ENCODE measurements at regions of chr6 and their contacts with region 1.

Region 1: DNA sequence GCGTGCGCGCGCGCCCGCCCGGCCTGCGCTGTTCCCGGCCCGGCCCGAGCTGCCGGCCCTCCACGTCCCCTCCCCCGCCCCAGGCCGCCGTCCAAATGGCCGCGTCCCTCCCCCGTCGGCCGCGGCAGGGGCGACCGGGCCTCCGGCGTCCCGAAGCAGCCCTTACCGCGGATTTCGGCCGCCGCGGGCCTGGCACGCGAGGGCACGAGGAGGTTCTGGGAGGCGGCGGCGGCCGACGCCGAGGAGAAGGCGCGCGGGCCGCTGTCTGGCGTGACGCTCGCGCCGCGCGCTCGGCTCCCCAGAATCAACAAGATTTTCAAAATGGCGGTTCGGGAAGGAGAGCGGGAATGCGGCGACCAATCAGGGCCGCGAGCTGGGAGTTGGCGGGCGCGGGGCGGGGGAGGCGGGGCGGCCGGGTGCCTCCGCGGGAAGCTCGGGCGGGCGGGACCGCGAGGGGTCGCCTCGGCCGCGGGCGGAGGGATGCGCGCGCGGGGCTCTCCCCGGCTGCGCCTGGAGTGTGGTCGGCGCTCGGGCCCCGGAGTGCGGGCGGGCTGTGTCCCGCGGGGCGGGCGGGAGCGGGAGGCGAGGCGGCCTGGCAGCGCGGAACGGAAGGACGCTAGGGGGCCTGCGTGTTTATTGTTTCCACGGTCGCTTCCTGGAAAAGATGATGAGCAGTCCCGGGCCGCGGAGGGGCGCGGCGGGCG is at the start of gene DEK:
- DNase-seq: peak; percentile 85
- ATAC-seq: peak; percentile 68
- H3K4me3 ChIP-seq: peak within 1 kb of the TSS; percentile 68 to 89 (median 83)
- H3K4me3 Mint-ChIP-seq: peak within 1 kb of the TSS; percentile 93
- H3K27ac ChIP-seq: peak within 1 kb of the TSS; percentile 62 to 85
- H3K27ac Mint-ChIP-seq: peak within 1 kb of the TSS; percentile 98
- H3K4me1 ChIP-seq: peaks cover 42 to 47% of the 10 kb centered on the region in 2 donors
- H3K4me1 Mint-ChIP-seq: peaks cover 49% of the 10 kb centered on the region
- H3K27me3 ChIP-seq: peaks cover 0 to 3% (median 0%) of the 10 kb centered on the region in 4 experiments
- H3K27me3 Mint-ChIP-seq: no peaks in the 10 kb centered on the region
- CTCF ChIP-seq: peak; percentile 53
- total RNA-seq, gene DEK: 103 and 114 TPM in 2 replicates

Region 2: DNA sequence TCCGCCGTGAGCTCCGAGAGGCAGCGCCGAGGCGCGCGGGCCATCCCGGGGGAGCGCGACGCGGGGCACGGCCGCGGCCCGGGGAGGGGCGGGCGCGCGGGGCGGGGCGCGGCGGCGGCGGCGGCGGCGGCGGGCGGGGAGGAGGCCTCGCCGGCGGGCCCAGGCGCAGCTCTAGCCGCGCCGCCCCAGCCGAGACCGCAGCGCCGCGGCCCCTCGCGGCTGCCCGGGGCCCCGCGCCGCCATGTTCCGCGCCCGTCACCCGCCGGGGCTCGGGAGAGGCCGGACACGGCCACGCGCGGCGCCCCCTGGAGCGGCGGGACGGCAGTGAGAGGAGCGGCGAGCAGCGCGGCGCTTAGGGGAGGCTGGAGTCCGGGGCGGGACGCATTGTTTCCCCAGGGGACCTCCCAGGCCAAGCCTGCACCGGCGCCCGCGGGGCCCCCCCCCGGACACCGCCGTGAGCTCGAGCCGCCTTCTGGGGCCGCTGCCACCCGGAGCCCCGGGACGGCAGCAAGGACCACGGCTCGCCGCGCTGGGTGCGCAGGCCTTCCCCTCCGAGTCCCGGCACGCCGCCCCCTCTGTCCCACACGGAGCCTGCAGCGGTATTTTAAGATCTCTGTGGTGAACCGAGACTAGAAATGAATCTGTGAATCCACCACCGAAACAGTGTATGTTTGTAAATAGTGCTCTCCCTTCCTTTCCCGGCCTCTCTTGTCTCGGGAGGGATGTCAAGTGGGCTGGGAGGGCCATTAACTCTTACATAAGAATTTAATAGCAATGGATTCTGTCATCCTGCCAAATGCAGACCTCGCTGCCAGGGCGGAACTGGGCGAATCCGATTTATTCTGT is 276.6 kb before region 1 on chr6 and contains the start of gene KIF13A:
- CTCF ChIA-PET with region 1: no interaction called
- POLR2A ChIA-PET with region 1: no interaction called
- intact Hi-C with region 1: loop called (anchors 5 kb)
- DNase-seq: peak; percentile 81
- ATAC-seq: peak; percentile 74
- H3K4me3 ChIP-seq: peak within 1 kb of the TSS; percentile 41 to 85 (median 63)
- H3K4me3 Mint-ChIP-seq: peak within 1 kb of the TSS; percentile 97
- H3K27ac ChIP-seq: peak within 1 kb of the TSS in 1 of 2 donors; percentile 58
- H3K27ac Mint-ChIP-seq: peak within 1 kb of the TSS; percentile 92
- H3K4me1 ChIP-seq: peaks cover 19 to 23% of the 10 kb centered on the region in 2 donors
- H3K4me1 Mint-ChIP-seq: peaks cover 40% of the 10 kb centered on the region
- H3K27me3 ChIP-seq: peaks cover 0 to 13% (median 5%) of the 10 kb centered on the region in 4 experiments
- H3K27me3 Mint-ChIP-seq: no peaks in the 10 kb centered on the region
- CTCF ChIP-seq: peak; percentile 35
- total RNA-seq, gene KIF13A: 21.3 and 23.4 TPM in 2 replicates

Region 3: GRCh38 chr6:18221288-18221615 is 43.1 kb before region 1 on chr6:
- CTCF ChIA-PET with region 1: no interaction called
- POLR2A ChIA-PET with region 1: no interaction called
- intact Hi-C with region 1: loop called (anchors 5 kb)
- DNase-seq: no peak
- ATAC-seq: no peak
- H3K4me3 ChIP-seq: no peak overlapping the region
- H3K4me3 Mint-ChIP-seq: no peak overlapping the region
- H3K27ac ChIP-seq: no peak overlapping the region
- H3K27ac Mint-ChIP-seq: no peak overlapping the region
- H3K4me1 ChIP-seq: peaks cover 2% of the 10 kb centered on the region in 2 donors
- H3K4me1 Mint-ChIP-seq: peaks cover 4% of the 10 kb centered on the region
- H3K27me3 ChIP-seq: no peaks in the 10 kb centered on the region
- H3K27me3 Mint-ChIP-seq: no peaks in the 10 kb centered on the region
- CTCF ChIP-seq: no peak

Region 4: GRCh38 chr6:18387061-18387721 is 122.8 kb after region 1 on chr6 and contains the start of gene RNF144B:
- CTCF ChIA-PET with region 1: no interaction called
- POLR2A ChIA-PET with region 1: no interaction called
- intact Hi-C with region 1: loop called (anchors 5 kb)
- DNase-seq: peak; percentile 84
- ATAC-seq: peak; percentile 95
- H3K4me3 ChIP-seq: peak within 1 kb of the TSS; percentile 72 to 100 (median 92)
- H3K4me3 Mint-ChIP-seq: peak within 1 kb of the TSS; percentile 99
- H3K27ac ChIP-seq: peak within 1 kb of the TSS; percentile 60 to 77
- H3K27ac Mint-ChIP-seq: peak within 1 kb of the TSS; percentile 95
- H3K4me1 ChIP-seq: peaks cover 32 to 35% of the 10 kb centered on the region in 2 donors
- H3K4me1 Mint-ChIP-seq: peaks cover 56% of the 10 kb centered on the region
- H3K27me3 ChIP-seq: no peaks in the 10 kb centered on the region
- H3K27me3 Mint-ChIP-seq: no peaks in the 10 kb centered on the region
- CTCF ChIP-seq: no peak
- total RNA-seq, gene RNF144B: 17.0 and 21.4 TPM in 2 replicates

Measured in B cell (primary cell).